Common myeloid progenitor, CD34-positive (primary cell): ENCODE measurements at regions of chr9 and their contacts with region 1.

Region 1: GRCh38 chr9:71604197-71605063 is 163.9 kb downstream of the CEMIP2 start:
- DNase-seq: peak; percentile 73 to 85 (median 81)
- H3K4me3 ChIP-seq: no peak overlapping the region
- H3K27ac ChIP-seq: no peak overlapping the region
- H3K4me1 ChIP-seq: no peaks in the 10 kb centered on the region
- H3K27me3 ChIP-seq: no peaks in the 10 kb centered on the region

Region 2: DNA sequence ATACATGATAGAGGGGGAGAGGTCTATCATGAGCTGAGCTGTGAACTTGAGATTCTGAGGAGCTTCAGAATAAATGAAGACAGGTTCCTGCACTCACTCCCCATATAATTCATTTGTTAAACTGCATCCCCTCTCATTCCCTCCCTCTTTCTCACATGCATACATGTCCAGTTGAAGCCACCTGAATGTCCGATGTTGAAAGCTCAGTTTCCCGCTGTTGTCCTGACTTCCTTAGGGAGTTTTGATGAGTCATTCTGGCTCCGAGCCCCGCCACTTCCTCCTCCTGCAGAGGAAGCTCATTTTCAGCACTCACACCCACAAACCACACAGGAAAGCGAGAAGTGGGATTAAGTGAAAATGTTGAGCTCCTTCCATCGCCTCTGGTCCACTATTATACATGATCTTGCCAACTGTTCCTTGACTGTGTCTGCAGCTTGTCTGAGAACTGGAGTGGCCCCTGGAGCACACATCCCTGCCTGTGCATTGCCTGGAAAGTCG is 42.7 kb after region 1 on chr9:
- CTCF ChIA-PET with region 1: interaction called, 11 read pairs
- POLR2A ChIA-PET with region 1: no interaction called
- DNase-seq: peak; percentile 83 to 85 (median 84)
- H3K4me3 ChIP-seq: peak overlapping the region in 4 of 7 experiments; percentile 12 to 50 (median 33)
- H3K27ac ChIP-seq: no peak overlapping the region
- H3K4me1 ChIP-seq: peaks cover 11 to 51% (median 40%) of the 10 kb centered on the region in 4 experiments
- H3K27me3 ChIP-seq: no peaks in the 10 kb centered on the region

Region 3: DNA sequence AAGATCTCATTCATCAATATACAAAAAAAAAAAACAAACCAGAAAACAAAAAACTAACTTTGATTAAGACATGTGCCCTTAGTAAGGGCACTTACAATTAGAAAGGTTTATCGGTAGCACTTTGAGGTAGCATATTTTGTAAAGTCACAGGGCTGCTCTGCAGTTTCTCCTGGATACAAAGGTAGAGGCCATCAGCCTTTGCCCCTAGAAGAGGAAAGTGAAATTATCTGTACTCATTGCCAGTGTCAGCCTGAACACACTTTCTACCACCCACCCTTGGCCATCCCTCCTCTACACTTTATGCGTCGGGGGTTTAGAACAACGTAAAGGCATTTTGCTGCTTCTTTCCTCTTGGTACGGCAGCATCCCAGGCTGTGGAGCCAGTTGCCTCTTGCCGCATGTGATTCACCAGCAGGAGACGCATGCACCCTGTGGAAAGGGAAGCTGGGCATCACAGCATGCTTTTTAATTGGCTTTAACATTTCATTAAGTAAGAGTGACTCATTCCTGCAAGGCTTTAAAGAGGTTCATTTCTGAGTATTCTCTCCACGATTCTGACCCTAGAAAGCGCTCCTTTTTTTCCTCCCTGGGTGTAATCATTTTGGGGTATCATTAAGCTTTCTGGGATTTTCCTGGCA is 79.3 kb after region 1 on chr9:
- CTCF ChIA-PET with region 1: interaction called, 14 read pairs
- POLR2A ChIA-PET with region 1: no interaction called
- DNase-seq: peak; percentile 78 to 89 (median 86)
- H3K4me3 ChIP-seq: peak overlapping the region in 1 of 7 experiments; percentile 3
- H3K27ac ChIP-seq: no peak overlapping the region
- H3K4me1 ChIP-seq: peaks cover 19 to 62% (median 40%) of the 10 kb centered on the region in 4 experiments
- H3K27me3 ChIP-seq: no peaks in the 10 kb centered on the region

Region 4: DNA sequence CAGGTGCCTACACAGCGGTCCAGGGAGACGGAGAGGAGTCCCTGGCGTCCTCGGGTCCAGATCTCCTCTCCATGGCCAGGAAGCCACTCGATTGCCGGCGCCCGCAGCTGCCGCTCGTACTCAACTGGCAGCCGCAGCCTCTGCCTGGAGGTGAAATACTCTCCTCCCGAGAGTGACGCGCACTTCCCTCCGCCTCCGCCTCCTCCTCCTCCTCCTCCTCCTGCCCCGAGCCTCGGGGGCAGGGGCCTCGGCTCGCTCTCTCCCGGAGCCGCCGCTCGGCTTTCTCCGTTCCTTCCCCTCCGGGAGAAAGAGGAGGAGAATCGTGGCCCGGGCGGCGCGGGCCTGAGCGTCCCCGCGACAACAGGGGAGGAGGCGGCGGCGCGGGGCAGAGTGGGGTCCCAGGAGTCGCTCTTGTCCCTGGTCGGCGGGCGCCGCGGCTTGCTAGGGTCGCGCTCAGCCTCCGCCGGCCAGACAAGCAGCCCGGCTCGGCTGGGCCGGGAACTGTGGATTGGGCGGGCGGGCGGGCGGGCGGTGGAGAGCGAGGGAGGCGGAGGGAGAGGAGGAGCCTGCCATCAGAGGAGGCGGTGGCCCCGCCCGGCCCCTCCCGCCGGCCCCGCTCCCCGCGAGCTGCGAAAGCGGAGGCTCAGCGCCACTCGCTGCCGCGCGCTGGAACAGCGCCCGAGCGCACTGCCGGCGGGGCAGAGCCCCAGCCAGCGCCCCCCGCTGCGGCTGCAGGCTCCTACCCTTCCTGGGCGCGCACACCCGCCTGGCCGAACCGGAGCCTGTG is 164.2 kb after region 1 on chr9 and contains the start of gene CEMIP2:
- CTCF ChIA-PET with region 1: interaction called, 22 read pairs
- POLR2A ChIA-PET with region 1: no interaction called
- DNase-seq: peak; percentile 90 to 96 (median 95)
- H3K4me3 ChIP-seq: peak within 1 kb of the TSS; percentile 72 to 98 (median 90)
- H3K27ac ChIP-seq: peak within 1 kb of the TSS; percentile 66 to 77
- H3K4me1 ChIP-seq: peaks cover 22 to 54% (median 41%) of the 10 kb centered on the region in 4 experiments
- H3K27me3 ChIP-seq: no peaks in the 10 kb centered on the region